Right ventricle myocardium inferior (tissue), 1 donor: ENCODE measurements at regions of chr10 and their contacts with region 1.

Region 1: GRCh38 chr10:29841724-29842649 is 207.2 kb upstream of the SVIL start:
- DNase-seq: peak; percentile 79
- ATAC-seq: peak; percentile 93

Region 2: GRCh38 chr10:29795850-29796249 is 46.1 kb before region 1 on chr10:
- intact Hi-C with region 1: loop called (anchors 5 kb)
- DNase-seq: no peak
- ATAC-seq: no peak